Left ventricle myocardium superior (tissue), 1 donor: ENCODE measurements at regions of chr19 and their contacts with region 1.

Region 1: DNA sequence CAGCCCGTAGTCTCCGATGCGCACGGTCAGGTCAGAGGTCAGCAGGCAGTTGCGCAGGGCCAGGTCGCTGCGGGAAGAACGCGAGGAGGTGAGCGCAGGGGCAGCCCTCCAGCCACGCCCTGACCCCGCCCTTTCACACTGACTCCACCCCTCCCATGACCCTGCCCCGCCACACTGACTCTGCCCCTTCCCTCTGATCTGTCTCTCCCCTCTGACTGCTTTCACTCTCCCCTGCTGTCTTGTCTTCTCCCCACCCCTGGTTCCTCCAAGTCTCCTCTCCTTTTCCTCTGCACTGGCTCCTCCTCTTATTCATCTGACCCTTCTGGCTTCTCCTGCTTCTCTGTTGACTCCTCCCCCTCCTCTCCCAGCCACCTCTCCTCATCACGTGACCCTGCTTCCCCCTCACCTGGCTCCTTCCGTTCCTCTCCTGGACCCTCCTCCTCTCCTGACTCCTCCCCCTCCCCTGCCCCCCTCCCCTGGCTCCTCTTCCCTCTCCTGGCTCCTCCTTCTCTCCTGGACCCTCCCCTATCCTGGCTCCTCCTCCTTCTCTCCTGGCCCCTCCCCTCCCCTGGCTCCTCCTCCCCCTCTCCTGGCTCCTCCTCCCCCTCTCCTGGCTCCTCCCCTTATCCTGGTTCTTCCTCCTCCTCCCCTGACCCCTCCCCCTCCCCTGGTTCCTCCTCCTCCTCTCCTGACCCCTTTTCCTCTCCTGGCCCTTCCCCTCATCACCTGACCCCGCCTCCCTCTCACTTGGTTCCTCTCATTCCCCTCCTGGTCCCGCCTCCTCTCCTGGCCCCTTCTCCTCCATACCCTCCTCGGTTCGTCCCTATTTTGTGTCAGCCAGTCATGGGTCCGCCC is 9.9 kb downstream of the LMTK3 start:
- DNase-seq: peak; percentile 57
- ATAC-seq: peak; percentile 44

Region 2: GRCh38 chr19:48424694-48425219 is 77.0 kb before region 1 on chr19:
- intact Hi-C with region 1: no loop called
- DNase-seq: no peak
- ATAC-seq: peak; percentile 43

Region 3: GRCh38 chr19:48588670-48589399 is 87.1 kb after region 1 on chr19:
- intact Hi-C with region 1: loop called (anchors 10 kb)
- DNase-seq: peak; percentile 97
- ATAC-seq: peak; percentile 88